Activated T-helper 2 cell treated with anti-CD3 and anti-CD28 coated beads, Interferon-gamma antibody, Interleukin-2, Interleukin-4, amounts not matched to agents 10 μg/mL and 5 μg/mL and 100 μg/mL, durations not matched to agents 14 hours and 24 hours and 36 hours (primary cell): ENCODE measurements at regions of chr5 and their contacts with region 1.

Region 1: DNA sequence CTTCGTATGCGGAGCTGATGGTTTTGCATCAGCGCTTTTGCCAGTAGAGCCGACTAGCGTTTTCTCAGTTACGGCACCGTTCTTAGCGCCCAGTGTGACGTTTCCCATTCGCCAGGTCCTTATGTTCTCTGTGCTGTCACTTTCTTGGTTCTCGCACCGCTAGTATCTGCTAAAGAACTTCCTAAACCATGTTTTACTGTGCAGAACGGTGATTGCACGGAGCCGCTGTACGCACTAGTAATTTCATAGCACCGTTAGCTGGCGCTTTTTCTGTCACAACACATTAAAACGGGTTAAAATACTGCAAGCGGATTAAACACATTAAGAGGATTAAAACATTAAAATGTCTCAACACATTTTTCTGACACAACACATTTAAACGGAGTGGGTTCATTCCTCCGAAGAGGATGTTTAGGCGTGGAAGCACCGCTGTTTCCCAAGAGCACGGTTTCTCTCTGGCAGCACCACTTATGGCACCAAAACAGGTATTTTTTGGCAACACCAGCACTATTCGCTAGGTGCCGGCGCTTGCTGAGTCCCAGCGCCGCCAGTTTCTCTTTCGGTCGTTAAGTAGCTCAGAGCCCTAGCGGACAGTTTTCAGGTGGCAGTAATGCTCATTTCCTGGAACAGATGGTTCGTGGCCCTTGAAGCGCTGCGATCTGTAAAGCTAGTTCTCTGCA is 20.4 kb downstream of the ANXA2R start:
- DNase-seq: peak; percentile 84
- H3K4me3 Mint-ChIP-seq: peak overlapping the region; percentile 96
- H3K27ac Mint-ChIP-seq: peak overlapping the region; percentile 99
- H3K4me1 Mint-ChIP-seq: peaks cover 38% of the 10 kb centered on the region
- H3K27me3 Mint-ChIP-seq: no peaks in the 10 kb centered on the region

Region 2: DNA sequence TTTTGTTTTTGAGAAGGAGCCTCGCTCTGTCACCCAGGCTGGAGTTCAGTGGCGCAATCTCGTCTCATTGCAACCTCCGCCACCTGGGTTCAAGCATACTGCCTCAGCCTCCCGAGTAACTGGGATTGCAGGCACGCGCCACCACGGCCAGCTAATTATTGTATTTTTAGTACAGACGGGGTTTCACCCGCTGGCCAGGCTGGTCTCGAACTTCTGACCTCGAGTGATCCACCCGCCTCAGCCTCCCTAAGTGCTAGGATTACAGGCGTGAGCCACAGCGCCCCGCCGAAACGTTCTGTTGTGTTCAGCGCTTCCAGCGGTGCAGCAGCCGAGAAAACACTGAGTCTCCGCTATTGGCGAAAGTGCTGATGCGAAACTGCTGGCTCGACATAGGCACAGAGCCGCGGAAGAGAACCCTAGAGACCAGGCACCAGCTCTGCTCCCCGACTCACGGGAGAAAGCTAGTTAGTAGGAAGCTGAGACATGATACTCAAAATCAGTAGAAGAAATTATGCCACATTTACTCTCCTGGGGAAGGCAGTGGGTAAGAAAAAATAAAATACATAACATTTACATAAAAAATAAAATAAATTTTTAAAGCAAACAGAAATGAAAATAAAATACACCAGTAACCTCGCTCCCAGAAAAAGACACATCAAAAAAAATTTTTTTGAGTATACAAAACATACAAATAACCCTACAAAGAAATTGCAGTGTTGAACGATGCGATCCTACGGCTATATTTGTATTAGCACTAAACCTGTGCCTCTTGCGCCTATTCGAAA is 11.2 kb before region 1 on chr5:
- intact Hi-C with region 1: loop called (anchors 1 kb)
- DNase-seq: peak; percentile 88
- H3K4me3 Mint-ChIP-seq: peak overlapping the region; percentile 85
- H3K27ac Mint-ChIP-seq: peak overlapping the region; percentile 95
- H3K4me1 Mint-ChIP-seq: peaks cover 24% of the 10 kb centered on the region
- H3K27me3 Mint-ChIP-seq: no peaks in the 10 kb centered on the region

Region 3: GRCh38 chr5:43034591-43034968 is 14.8 kb after region 1 on chr5:
- intact Hi-C with region 1: loop called (anchors 1 kb)
- DNase-seq: no peak
- H3K4me3 Mint-ChIP-seq: no peak overlapping the region
- H3K27ac Mint-ChIP-seq: no peak overlapping the region
- H3K4me1 Mint-ChIP-seq: peaks cover 41% of the 10 kb centered on the region
- H3K27me3 Mint-ChIP-seq: no peaks in the 10 kb centered on the region

Region 4: DNA sequence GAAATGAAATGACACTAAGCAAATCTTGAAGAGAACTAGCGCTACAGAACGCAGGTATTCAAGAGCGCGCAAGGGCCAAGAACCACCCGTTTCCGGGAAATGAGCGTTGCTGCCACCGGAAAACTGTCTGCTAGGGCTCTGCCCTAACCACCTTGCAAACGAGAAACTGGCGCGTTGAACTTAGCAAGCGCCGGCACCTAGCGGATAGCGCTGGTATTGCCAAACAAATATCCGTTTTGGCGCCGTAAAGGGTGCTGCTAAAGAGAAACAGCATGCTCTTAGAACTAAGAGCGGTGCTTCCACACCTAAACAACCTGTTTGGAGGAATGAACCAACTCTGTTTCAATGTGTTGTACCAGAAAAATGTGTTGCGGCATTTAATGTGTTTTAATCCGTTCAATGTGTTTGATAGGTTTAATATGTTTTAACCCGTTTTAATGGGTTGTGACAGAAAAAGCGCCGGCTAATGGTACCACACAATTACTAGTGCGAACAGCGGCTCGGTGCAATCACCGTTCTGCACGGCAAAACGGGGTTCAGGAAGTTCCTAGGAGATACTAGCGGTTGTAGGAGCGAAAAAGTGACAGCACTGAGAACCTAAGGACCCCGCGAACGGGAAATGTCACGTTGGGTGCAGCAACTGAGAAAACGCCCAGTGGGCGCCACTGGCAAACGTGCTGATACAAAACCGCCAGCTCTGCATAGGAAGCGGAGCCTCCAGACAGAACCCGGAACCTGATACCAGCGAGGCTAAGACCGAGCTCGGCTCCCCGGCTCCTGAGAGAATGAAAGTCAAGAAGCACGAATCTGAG is 20.7 kb after region 1 on chr5 and contains the start of gene ANXA2R:
- intact Hi-C with region 1: loop called (anchors 1 kb)
- DNase-seq: peak; percentile 95
- H3K4me3 Mint-ChIP-seq: peak within 1 kb of the TSS; percentile 92
- H3K27ac Mint-ChIP-seq: peak within 1 kb of the TSS; percentile 97
- H3K4me1 Mint-ChIP-seq: peaks cover 47% of the 10 kb centered on the region
- H3K27me3 Mint-ChIP-seq: no peaks in the 10 kb centered on the region
- total RNA-seq, gene ANXA2R: 2.1 and 2.5 TPM in 2 replicates